BJ (cell line): ENCODE measurements at regions of chr3 and their contacts with region 1.

Region 1: GRCh38 chr3:141460097-141460704 is 26.6 kb upstream of the RASA2 start:
- DNase-seq: no peak
- H3K4me3 ChIP-seq: no peak overlapping the region
- H3K27me3 ChIP-seq: no peaks in the 10 kb centered on the region
- CTCF ChIP-seq: peak; percentile 85

Region 2: DNA sequence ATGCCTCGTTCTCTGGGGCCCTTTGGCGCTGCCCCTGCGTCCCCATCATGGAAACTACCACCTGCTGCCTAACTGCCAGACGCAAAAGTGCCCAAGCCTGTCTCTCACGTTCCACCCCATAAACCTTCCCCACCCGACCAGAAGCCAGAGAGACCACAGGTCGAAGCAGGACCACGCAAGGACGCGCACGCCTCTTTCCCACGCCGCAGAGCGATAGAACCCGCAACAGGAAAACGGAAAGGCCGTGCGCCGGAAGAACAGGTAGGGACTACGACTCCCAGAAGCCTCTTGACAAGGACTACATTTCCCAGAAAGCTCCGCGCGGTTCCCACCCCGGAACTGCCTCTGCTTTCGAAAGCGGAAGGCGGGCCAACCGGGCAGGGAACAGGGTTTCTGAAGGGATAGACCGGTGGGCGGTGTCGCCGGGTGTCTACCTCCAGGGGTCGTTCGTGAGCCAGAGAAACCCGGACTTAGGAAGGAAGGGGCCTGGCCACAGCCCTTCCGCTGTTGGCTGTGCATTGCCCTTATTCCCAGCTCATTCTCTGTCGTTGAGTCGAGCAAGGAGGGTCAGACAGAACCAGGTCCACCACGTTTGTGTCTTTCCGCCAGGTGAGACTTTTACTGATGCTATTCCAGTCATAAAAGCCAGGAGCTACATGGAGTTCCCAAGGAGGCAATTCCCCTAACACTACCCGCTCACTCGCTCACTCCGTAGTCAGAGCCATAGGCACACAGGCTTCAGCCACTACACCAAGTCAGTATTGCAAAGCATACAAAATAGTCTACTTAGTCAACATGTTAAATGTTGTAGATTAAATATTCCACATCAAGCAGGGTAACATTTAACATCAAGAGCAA is 148.5 kb before region 1 on chr3:
- CTCF ChIA-PET with region 1: interaction called, 282 read pairs
- POLR2A ChIA-PET with region 1: interaction called, 5 read pairs
- DNase-seq: peak; percentile 87
- H3K4me3 ChIP-seq: peak overlapping the region; percentile 64
- H3K27me3 ChIP-seq: no peaks in the 10 kb centered on the region
- CTCF ChIP-seq: peak; percentile 86

Region 3: DNA sequence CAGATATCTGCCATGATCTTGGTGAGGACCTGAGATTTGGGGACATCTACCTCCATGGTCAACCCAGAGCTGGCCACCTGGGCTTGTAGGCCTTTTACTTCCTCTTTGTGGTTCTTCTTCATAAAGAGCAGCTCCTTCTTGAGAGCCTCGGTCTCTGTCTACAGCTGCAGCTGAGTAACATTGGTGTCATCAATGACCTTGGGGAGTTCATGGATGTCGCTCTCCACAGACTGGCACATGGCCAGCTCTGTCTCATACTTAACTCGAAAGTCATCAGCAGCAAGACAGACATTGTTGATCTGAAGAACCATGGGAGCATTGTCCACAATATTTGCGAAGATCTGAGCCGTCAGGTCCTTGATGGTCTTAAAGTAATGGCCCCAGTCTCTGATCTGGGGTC is 11.0 kb after region 1 on chr3:
- CTCF ChIA-PET with region 1: interaction called, 13 read pairs
- POLR2A ChIA-PET with region 1: no interaction called
- DNase-seq: no peak
- H3K4me3 ChIP-seq: no peak overlapping the region
- H3K27me3 ChIP-seq: no peaks in the 10 kb centered on the region
- CTCF ChIP-seq: no peak

Region 4: DNA sequence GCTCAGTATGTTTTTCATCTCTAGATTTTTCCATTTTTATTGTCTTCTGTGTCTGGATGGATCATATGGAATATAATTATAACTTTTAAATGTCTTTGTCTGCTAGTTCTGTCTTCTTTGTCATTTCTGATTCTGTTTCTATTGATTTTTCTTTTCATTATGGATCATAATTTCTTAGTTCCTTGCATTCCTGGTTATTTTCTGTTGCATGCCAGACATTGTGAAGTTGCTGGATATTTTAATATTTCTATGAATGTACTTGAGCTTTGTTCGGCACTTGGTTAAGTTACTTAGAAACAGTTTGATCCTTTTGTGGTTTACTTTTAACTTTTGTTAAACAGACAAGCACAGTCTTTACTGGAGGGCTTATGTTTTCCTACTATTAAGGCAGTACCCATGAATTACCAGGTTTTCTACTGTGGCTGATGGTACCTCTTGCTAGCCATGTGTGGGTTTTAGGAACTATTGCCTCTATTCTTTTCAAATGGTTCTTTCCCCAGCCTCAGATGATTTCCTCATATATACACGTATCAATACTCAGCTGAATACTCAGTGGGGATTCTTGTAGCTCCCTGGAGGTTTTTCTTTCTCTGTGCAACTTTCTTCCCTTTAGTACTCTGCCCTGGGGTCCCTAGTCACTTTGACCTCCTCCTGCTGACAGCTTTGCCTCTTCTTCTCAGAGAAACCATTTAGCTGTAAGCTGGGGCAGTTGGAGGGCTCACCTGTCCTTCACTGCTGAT is 90.9 kb after region 1 on chr3:
- CTCF ChIA-PET with region 1: interaction called, 207 read pairs
- POLR2A ChIA-PET with region 1: interaction called, 3 read pairs
- DNase-seq: no peak
- H3K4me3 ChIP-seq: no peak overlapping the region
- H3K27me3 ChIP-seq: no peaks in the 10 kb centered on the region
- CTCF ChIP-seq: no peak

Region 5: GRCh38 chr3:141561426-141562034 is 101.3 kb after region 1 on chr3:
- CTCF ChIA-PET with region 1: interaction called, 207 read pairs
- POLR2A ChIA-PET with region 1: interaction called, 5 read pairs
- DNase-seq: peak; percentile 33
- H3K4me3 ChIP-seq: no peak overlapping the region
- H3K27me3 ChIP-seq: no peaks in the 10 kb centered on the region
- CTCF ChIP-seq: peak; percentile 93

Region 6: DNA sequence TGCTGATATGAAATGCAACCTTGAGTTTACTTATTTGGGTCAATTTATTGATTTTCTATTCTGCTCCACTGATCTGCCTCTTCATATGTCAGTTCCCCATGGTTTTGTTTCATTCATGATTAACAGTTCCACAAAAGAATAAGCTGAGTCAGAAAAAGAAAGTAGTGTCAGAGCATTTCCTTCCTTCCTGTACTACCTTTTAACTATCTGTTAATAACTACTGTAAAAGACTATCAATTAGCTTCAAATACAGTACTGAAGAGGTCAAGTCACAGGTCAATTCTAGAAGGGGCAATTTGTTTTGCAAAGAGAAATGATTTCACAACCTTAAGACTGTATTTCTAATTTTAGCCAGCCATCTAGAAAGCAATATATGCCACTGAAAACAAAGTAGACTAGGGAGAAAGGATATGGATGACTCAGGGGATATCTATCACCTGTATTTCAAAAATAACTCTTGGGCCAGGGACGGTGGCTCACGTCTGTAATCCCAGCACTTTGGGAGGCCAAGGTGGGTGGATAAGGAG is 559.7 kb after region 1 on chr3:
- CTCF ChIA-PET with region 1: no interaction called
- POLR2A ChIA-PET with region 1: no interaction called
- DNase-seq: no peak
- H3K4me3 ChIP-seq: no peak overlapping the region
- H3K27me3 ChIP-seq: no peaks in the 10 kb centered on the region
- CTCF ChIP-seq: no peak